B cell (primary cell): ENCODE measurements at regions of chr7 and their contacts with region 1.

Region 1: GRCh38 chr7:20199015-20199737 is 18.0 kb downstream of the MACC1 start:
- DNase-seq: peak; percentile 87
- ATAC-seq: peak; percentile 72
- H3K4me3 ChIP-seq: peak overlapping the region in 1 of 5 experiments; percentile 20
- H3K4me3 Mint-ChIP-seq: peak overlapping the region; percentile 73
- H3K27ac ChIP-seq: peak overlapping the region; percentile 86 to 91
- H3K27ac Mint-ChIP-seq: peak overlapping the region; percentile 92
- H3K4me1 ChIP-seq: peaks cover 32 to 33% of the 10 kb centered on the region in 2 donors
- H3K4me1 Mint-ChIP-seq: peaks cover 41% of the 10 kb centered on the region
- H3K27me3 ChIP-seq: no peaks in the 10 kb centered on the region
- H3K27me3 Mint-ChIP-seq: no peaks in the 10 kb centered on the region
- CTCF ChIP-seq: no peak

Region 2: DNA sequence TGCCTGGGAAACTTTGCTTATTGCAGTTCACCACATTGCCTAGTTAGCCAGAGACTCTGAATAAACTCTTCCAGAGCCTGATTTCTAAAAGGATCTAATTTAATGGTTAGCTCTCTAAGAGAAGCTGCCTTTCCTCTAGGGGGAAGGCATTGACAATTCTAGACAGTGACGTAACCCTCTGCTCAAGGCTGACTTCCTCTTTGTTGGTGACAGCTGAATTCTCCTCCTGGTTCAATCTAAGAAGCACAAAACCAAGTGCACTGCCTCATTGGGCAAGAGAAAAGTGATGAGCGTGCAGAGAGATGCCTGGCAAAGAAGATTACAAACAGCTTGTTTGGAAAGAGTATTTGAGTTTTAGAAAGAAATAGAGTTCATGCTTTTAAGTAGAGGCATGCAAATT is 84.7 kb before region 1 on chr7:
- CTCF ChIA-PET with region 1: no interaction called
- POLR2A ChIA-PET with region 1: no interaction called
- intact Hi-C with region 1: loop called (anchors 5 kb)
- DNase-seq: peak; percentile 85
- ATAC-seq: peak; percentile 91
- H3K4me3 ChIP-seq: no peak overlapping the region
- H3K4me3 Mint-ChIP-seq: peak overlapping the region; percentile 60
- H3K27ac ChIP-seq: peak overlapping the region in 1 of 2 donors; percentile 62
- H3K27ac Mint-ChIP-seq: peak overlapping the region; percentile 69
- H3K4me1 ChIP-seq: peaks cover 19 to 23% of the 10 kb centered on the region in 2 donors
- H3K4me1 Mint-ChIP-seq: peaks cover 23% of the 10 kb centered on the region
- H3K27me3 ChIP-seq: no peaks in the 10 kb centered on the region
- H3K27me3 Mint-ChIP-seq: no peaks in the 10 kb centered on the region
- CTCF ChIP-seq: peak; percentile 27

Region 3: DNA sequence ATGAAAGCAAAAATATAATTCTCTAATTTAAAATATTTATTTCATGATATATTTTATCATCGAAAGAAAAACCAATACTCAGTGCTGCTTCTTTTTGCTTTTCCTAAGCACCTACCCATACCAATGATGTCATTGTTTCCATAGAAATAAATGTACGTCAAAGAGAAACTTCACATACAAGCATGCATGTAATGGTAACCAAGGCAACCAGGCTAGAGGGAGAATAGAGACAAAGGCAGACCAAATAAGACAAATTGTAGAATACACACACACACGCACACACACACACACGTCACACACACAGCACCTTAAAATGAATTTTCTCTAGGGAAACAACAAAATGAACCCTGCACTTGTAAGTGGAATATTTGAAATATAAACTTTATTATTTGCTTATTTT is 57.5 kb before region 1 on chr7:
- CTCF ChIA-PET with region 1: no interaction called
- POLR2A ChIA-PET with region 1: no interaction called
- intact Hi-C with region 1: no loop called
- DNase-seq: no peak
- ATAC-seq: no peak
- H3K4me3 ChIP-seq: no peak overlapping the region
- H3K4me3 Mint-ChIP-seq: no peak overlapping the region
- H3K27ac ChIP-seq: no peak overlapping the region
- H3K27ac Mint-ChIP-seq: no peak overlapping the region
- H3K4me1 ChIP-seq: no peaks in the 10 kb centered on the region
- H3K4me1 Mint-ChIP-seq: peaks cover 7% of the 10 kb centered on the region
- H3K27me3 ChIP-seq: no peaks in the 10 kb centered on the region
- H3K27me3 Mint-ChIP-seq: no peaks in the 10 kb centered on the region
- CTCF ChIP-seq: no peak

Region 4: GRCh38 chr7:20238754-20239324 is 39.7 kb after region 1 on chr7:
- CTCF ChIA-PET with region 1: no interaction called
- POLR2A ChIA-PET with region 1: no interaction called
- intact Hi-C with region 1: loop called (anchors 1 kb)
- DNase-seq: peak; percentile 81
- ATAC-seq: peak; percentile 83
- H3K4me3 ChIP-seq: peak overlapping the region in 3 of 5 experiments; percentile 1 to 20 (median 8)
- H3K4me3 Mint-ChIP-seq: peak overlapping the region; percentile 83
- H3K27ac ChIP-seq: peak overlapping the region; percentile 26 to 60
- H3K27ac Mint-ChIP-seq: peak overlapping the region; percentile 95
- H3K4me1 ChIP-seq: peaks cover 16 to 18% of the 10 kb centered on the region in 2 donors
- H3K4me1 Mint-ChIP-seq: peaks cover 43% of the 10 kb centered on the region
- H3K27me3 ChIP-seq: no peaks in the 10 kb centered on the region
- H3K27me3 Mint-ChIP-seq: no peaks in the 10 kb centered on the region
- CTCF ChIP-seq: no peak

Region 5: DNA sequence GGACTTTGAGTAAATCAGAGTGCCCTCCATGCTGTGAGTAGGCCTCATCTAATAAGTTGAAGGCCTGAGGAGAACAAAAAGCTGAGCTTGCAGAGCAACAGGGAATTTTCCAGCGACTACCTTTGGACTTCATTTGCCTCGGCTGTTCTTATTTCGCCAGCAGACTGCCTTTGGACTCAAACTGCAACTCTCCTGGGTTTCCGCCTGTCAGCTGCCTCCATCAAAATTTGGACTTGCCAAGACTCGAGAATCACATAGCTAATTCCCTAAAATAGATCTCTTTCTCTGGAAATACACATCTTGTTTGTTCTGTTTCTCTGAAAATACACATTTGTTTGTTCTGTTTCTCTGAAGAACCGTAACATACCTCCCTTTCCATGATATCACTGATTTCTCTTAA is 225.3 kb after region 1 on chr7:
- CTCF ChIA-PET with region 1: no interaction called
- POLR2A ChIA-PET with region 1: no interaction called
- intact Hi-C with region 1: no loop called
- DNase-seq: no peak
- ATAC-seq: no peak
- H3K4me3 ChIP-seq: no peak overlapping the region
- H3K4me3 Mint-ChIP-seq: no peak overlapping the region
- H3K27ac ChIP-seq: no peak overlapping the region
- H3K27ac Mint-ChIP-seq: no peak overlapping the region
- H3K4me1 ChIP-seq: no peaks in the 10 kb centered on the region
- H3K4me1 Mint-ChIP-seq: no peaks in the 10 kb centered on the region
- H3K27me3 ChIP-seq: no peaks in the 10 kb centered on the region
- H3K27me3 Mint-ChIP-seq: peaks cover 10% of the 10 kb centered on the region
- CTCF ChIP-seq: no peak

Region 6: GRCh38 chr7:20591058-20591457 is 391.9 kb after region 1 on chr7:
- CTCF ChIA-PET with region 1: no interaction called
- POLR2A ChIA-PET with region 1: no interaction called
- intact Hi-C with region 1: no loop called
- DNase-seq: no peak
- ATAC-seq: no peak
- H3K4me3 ChIP-seq: no peak overlapping the region
- H3K4me3 Mint-ChIP-seq: no peak overlapping the region
- H3K27ac ChIP-seq: no peak overlapping the region
- H3K27ac Mint-ChIP-seq: no peak overlapping the region
- H3K4me1 ChIP-seq: no peaks in the 10 kb centered on the region
- H3K4me1 Mint-ChIP-seq: no peaks in the 10 kb centered on the region
- H3K27me3 ChIP-seq: no peaks in the 10 kb centered on the region
- H3K27me3 Mint-ChIP-seq: peaks cover 4% of the 10 kb centered on the region
- CTCF ChIP-seq: no peak